Head of caudate nucleus (tissue), 42 donors: ENCODE measurements at regions of chr12 and their contacts with region 1.

Region 1: GRCh38 chr12:49233842-49234535 is 30.9 kb upstream of the TUBA1C start:
- DNase-seq: peak; percentile 71 to 96 (median 86)

Region 2: GRCh38 chr12:49188914-49189367 is 45.0 kb before region 1 on chr12 and contains the start of gene TUBA1A:
- intact Hi-C with region 1: loop called (anchors 1 kb)
- DNase-seq: peak; percentile 93 to 100 (median 99)

Region 3: DNA sequence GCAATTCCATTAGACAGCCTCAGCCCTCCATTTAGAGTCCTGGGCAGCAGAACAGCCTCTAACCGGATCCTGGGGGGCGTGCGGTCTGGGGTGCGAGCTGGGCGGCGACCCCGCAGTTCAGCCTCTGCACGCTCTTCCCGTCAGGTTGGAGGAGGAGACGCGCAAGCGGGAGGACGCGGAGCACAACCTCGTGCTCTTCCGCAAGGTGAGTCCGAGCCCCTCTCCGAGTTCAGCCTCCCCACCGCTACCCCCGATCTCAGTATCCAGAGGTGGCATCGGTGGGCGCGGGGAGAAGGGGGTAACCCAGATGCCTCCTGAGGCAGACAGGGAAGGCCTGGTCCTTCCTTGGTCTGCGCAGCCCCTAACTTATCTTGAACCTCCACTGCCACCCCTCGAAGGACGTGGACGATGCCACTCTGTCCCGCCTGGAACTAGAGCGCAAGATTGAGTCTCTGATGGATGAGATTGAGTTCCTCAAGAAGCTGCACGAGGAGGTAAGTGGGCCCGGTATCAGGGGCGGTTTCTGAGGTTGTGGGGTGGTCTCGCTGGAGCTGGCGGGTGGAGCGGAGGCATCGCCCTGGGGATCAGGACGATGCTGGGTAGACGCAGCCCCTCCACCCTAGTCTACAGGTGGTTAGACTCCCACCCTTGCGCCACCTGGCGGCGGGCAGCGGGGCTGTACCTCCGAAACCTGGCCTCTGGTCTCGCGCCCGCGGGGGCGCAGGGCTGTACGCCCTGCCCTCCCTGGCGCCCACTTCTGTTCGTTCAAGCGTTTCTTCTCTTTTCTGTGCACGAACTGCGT is 62.2 kb after region 1 on chr12:
- intact Hi-C with region 1: no loop called
- DNase-seq: peak in 7 of 42 donors; percentile 5 to 55 (median 33)

Region 4: GRCh38 chr12:49553512-49554088 is 319.6 kb after region 1 on chr12:
- intact Hi-C with region 1: no loop called
- DNase-seq: peak in 6 of 42 donors; percentile 37 to 65 (median 51)